ENCODE measurements at regions of chr2 and their contacts with region 1.

Region 1: DNA sequence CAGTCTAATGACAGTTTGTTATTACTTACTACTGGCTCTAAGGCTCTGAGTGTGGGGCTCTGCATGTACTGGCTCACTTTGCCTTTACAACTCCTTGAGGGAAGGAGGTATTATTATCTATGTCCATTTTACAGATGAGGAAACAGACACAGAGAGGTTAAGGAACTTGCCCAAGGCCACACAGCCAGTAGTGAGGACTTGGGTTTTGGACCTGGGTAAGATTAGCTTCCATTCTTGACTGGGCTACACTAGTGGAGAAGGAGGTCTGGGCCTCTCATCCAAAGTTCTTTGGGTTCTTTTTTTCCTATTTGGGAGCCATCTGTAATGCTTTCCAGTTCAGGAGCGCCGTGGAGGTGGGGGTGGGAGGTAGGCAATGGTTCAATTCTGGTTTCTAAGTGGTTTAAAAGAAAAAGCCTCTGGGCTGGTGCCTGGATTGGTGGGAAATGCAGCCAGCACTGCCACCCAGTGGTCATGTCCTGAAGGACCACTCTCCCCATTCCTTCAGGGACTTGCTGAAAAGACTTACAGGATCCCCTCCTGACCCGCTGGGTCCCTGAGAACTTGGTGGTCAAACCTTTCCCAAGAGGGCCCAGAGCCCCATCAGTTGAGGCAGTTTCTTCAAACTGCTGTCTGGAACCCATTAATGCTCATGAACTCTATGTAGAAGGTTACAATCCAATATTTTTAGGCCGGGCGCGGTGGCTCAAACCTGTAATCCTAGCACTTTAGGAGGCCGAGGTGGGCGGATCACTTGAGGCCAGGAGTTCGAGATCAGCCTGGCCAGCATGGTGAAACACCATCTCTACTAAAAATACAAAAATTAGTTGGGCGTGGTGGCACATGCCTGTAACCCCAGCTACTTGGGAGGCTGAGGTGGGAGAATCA is 38.6 kb upstream of the NOTO start:
- DNase-seq: peak in 1 of 2 donors; percentile 66
- ATAC-seq: peak; percentile 87

Region 2: DNA sequence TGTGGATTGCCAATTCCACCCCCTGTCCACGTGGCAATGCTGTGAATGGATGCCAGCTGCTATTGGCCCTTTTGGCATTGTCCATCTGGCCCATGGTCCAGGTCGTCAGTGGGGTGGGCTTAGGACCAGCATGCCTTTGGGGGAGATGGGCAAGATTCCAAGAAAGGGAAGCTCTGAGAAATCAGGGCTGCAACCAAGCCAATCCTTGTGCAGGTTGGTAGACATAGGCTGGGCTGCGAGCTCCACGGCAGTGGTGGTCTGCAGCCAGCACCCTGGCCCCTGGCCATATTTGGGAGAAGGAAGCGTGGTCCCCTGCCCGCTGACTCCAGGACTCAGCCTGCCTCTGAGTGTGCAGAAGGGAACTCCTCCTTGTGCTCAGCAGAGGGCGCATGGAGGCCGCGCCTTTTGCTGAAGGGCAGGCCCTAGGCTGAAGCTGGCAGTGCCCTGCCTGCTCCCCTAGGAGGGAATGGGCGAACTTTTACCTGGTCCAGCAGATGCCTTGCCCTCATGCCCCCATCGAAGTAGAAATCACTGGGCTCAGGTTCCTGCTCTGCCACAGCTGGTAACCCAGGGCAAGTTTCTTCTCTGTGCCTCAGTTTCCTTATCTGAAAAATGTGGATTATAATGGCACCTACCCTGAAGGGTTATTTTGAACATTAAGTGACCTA is 271.1 kb before region 1 on chr2:
- intact Hi-C with region 1: loop called in 1 of 2 experiments (anchors 10 kb)
- DNase-seq: peak in 1 of 2 donors; percentile 80
- ATAC-seq: peak; percentile 60

Region 3: DNA sequence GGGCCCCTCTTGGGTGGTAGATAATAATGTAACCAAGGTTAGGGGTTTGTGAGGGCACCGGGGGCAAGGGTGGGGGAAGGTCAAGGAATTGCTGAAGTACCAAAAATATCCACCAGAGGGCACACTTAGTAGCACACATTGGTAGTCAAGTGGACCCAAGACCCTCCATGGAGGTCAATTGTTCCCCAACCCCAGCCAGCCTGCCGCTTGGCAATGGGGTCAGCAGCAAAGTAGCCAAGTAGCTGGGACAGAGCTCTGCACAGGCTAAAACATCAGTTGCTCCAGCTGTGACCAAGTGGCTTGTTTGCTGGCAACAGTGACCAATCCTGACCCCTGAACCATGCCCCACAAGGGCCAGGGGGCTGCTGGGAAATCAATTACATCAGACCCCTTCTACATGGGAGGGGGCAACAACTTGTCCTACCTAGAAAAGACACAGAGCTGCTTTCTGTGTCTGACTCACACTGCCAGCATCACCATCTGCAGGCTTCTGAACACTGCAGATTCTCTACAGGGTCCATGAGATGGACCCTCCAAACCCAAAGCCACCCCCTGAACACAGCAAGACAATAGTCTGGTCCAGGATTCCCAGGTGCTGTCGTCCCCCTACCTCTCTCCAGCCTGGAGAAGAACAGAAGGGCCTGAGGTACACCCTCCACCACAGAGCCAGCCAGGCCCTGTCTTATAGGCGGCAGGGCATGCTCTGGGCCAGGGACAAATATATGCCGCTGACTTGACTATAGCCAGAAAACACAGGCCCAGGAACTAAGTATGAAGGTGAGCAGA is 170.4 kb before region 1 on chr2:
- intact Hi-C with region 1: loop called in 1 of 2 experiments (anchors 5 kb)
- DNase-seq: no peak
- ATAC-seq: peak; percentile 56

Region 4: DNA sequence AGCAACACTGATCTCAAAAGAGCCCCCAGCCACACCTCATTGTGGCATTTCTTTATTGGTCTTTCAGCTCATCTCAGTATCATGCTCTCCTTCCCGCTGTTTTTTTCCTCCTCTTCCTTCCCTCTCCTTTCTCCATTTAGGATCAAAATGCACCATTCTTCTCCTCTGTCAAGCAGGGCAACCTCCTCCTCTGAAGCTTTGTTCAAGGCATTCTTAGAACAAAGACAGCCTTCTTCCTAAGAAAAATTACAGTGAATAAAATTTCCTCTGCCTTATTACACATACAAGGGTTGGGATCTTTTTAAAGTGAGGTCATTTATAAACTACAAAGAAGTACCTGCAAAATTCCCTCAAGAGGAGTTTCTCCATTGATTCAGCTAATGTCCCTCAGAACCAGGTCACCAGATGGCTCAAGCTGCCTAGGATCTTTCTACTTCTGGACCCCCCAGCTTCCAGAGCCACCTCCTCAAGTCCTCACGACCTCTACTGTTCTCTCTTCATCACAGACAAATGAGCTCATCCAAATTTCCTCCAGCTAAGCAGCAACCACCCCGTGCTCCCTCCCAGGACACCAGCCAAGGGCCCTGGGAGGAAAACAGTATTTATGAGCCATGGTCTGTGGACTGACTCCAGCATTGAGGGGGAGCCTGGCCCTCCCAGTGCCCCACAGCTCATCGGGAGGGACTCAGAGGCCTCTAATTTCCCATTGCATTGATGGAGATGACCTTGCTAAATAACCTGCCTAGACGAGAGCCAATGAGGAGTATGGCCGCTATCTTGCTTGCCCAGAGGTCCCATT is 110.2 kb before region 1 on chr2:
- intact Hi-C with region 1: no loop called
- DNase-seq: no peak
- ATAC-seq: no peak

Region 5: DNA sequence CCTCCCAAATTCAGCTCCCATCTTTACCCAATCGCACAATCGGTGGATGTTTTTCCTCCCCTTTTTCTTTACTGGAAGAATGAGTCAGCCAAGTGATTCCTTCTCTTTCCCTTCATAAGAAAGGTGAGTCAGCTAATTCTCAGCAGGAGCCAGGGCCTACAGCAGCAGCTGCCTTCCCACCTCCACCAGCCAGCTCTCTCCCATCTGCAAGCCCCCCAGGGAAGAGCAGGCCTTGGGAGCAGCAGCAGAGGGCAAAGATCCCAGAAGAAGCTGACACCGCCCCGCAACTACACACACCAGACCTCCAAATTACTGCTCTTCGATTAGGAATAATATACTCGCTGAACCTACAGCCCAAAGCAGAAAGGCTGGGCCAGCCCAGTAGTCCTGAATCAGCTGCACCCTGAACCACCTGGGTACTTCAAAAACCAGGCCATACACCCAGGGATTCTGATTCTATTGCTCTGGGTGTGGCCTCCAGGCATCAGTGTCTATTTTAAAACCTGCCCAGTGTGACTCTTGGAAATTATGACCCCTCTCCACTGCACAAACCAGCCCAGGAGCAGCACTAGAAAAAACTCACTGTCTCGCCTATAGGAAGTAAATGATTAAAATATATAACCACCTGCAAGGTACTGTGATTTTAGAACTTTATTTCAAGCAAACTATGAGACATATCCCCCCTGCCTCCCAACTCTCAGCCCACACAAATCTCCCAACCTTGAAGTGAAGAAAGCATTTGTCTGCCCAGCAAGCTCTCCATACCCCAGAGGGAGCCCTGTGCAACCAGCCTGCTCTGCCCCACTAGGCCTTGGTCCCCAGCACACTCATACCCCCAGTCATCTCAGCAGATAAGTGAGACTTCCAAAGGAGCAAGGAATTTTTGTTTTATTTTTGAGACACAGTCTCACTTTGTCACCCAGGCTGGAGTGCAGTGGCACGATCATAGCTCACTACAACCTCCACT is 99.5 kb before region 1 on chr2:
- intact Hi-C with region 1: no loop called
- DNase-seq: no peak
- ATAC-seq: peak; percentile 87

Region 6: GRCh38 chr2:73085691-73086360 is 77.9 kb before region 1 on chr2:
- intact Hi-C with region 1: loop called (anchors 2 to 10 kb)
- DNase-seq: peak; percentile 75 to 92
- ATAC-seq: peak; percentile 84

Measured in left colon (tissue), 2 donors.